ENCODE measurements at regions of chr1 and their contacts with region 1.

Region 1: GRCh38 chr1:4512636-4513035 is 141.8 kb upstream of the AJAP1 start:
- DNase-seq: no peak
- H3K4me3 ChIP-seq: no peak overlapping the region
- H3K27ac ChIP-seq: no peak overlapping the region
- H3K4me1 ChIP-seq: no peaks in the 10 kb centered on the region
- H3K27me3 ChIP-seq: no peaks in the 10 kb centered on the region
- CTCF ChIP-seq: no peak
- EP300 ChIP-seq: no peak
- POLR2A ChIP-seq: no peak

Region 2: DNA sequence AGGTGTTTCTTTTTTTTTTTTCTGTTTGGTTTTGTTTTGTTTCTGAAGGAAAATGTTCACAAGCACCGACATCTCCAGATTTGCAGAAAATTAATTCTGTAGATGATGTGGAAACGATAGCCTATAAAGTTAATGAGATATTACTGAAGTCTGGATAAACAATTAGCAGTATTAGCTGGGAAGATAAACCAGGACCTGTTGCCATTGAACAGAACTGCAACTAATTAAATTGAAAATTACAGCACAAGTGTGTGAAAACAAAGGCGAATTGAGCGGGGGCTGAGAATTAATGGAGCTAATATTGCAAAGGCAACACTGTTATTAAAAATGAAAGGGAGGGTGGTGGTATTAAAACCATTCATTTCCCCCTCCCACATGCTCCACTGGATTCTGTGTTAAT is 34.3 kb after region 1 on chr1:
- in situ Hi-C with region 1: no loop called
- intact Hi-C with region 1: loop called (anchors 1 kb)
- DNase-seq: no peak
- H3K4me3 ChIP-seq: no peak overlapping the region
- H3K27ac ChIP-seq: no peak overlapping the region
- H3K4me1 ChIP-seq: no peaks in the 10 kb centered on the region
- H3K27me3 ChIP-seq: no peaks in the 10 kb centered on the region
- CTCF ChIP-seq: no peak
- EP300 ChIP-seq: no peak
- POLR2A ChIP-seq: no peak

Measured in transverse colon (tissue), 4 donors.